Left cardiac atrium (tissue), 4 donors: ENCODE measurements at regions of chr7 and their contacts with region 1.

Region 1: GRCh38 chr7:130721486-130722280 is 12.3 kb downstream of the KLF14 start:
- DNase-seq: peak; percentile 79
- ATAC-seq: peak; percentile 97 to 99

Region 2: DNA sequence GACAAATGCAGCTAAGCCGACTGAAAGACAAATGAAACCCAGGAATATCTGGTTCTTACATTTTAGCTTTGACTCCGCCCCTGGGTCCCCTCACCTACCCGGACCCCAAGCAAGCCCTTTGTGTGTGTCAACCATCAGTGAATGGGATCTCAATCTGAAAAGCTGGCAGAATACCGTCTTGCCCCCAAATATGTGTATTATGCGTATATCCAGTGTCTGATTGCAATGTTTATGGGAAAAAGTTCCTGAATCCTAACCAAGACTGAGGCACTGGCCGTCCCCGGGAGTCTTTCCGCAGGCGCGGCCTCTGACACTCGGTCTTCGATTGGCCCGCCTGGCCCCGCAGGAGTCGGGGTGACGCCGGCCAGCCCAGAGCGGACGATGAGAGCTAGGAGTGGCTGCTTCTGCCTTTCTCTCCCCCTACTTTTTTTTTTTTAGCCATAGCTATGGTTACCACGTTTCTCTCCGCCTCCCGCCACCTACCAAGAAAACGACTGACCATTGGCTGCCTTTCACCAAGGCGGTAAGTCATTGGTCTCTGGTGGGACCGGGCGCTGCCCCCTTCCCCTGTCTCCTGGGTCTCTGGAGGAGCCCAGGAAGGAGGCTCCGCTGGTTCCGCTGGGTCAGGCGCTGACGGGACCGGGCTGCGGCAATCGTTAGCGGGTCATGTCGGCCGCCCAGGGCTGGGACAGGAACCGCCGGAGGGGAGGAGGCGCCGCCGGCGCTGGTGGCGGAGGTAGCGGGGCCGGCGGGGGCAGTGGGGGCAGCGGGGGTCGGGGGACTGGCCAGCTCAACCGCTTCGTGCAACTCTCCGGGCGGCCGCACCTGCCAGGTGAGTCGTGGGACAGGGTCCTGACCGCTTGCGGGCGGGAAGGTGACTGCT is 651.5 kb before region 1 on chr7 and contains the start of gene KLHDC10:
- intact Hi-C with region 1: loop called (anchors 2 to 10 kb)
- DNase-seq: peak; percentile 97
- ATAC-seq: peak; percentile 99 to 100
- total RNA-seq, gene KLHDC10: 23.8 to 28.5 TPM

Region 3: DNA sequence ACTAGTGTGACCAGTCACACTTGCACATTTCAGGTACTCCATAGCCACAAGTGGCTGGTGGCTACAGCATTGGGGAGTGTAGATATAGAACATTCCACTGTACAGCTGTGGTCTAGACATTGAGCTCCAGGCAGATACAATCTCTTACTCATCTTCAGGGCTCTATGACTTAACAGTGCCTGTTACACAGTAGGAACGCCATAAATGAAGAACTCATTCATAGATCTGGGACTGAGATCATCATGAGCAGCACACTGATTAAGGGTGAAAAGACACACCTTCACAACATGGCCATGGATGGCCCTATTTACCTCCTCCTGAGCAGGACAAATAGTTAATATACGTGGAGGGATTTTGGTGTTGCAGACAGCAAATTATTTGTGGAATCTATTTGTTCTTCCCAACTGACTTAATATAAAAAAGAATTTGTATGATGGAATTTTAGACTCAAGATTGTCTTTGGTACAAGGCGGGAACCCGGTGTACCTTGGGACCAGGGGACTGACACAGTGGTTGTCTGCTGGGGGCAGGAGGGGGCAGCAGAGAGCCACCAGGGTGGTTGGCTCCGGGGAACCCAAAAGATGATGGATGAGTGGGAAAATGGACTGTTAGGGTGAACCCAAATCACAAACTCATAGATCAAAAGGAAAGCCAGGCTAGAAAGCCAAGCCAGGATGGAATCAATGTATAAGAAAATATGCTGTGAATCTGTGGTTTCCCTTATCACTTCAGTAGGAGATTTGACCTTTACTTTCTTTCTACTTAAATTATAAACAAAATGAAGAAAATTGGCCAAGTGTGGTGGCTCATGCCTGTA is 479.3 kb before region 1 on chr7:
- intact Hi-C with region 1: loop called in 1 of 2 experiments (anchors 2 kb)
- DNase-seq: peak; percentile 71
- ATAC-seq: peak; percentile 70 to 92

Region 4: GRCh38 chr7:130486114-130486958 is 235.3 kb before region 1 on chr7:
- intact Hi-C with region 1: loop called in 1 of 2 experiments (anchors 5 kb)
- DNase-seq: peak; percentile 66
- ATAC-seq: peak; percentile 53 to 68